Activated CD4-positive, alpha-beta memory T cell treated with anti-CD3 and anti-CD28 coated beads, Interleukin-2, amount 10 ng/mL, durations not matched to agents 7 days and 5 days (primary cell): ENCODE measurements at regions of chr2 and their contacts with region 1.

Region 1: DNA sequence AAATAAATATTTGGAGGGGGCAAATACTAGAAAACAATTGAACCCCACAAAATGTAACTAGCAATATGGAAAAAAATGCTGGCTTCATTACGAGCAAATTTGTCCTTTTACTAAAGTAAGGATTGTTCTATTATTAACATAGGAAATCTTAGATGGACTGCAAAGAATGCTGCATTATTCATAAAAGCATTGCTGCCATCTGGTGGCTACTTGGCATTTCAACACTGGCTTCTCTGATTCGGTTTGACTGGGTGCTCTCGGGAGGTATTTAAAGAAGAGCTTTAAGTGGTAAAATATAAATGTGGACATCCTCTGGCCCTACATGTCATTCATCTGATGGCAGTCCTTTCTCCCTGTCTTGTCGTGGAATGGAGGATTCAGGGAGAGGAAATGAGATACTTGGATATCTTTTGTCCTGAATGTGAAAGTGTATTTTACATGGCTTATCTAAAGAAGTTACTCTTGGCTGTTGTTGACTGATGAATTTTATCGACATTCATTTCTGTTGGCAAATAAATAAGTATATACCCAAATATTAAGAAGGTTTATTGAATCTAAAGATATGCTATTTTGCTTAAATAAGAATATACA is 130.2 kb downstream of the ARHGAP15 start:
- DNase-seq: peak; percentile 79
- H3K4me3 Mint-ChIP-seq: peak overlapping the region; percentile 71
- H3K27ac Mint-ChIP-seq: peak overlapping the region; percentile 99
- H3K4me1 Mint-ChIP-seq: peaks cover 81% of the 10 kb centered on the region
- H3K27me3 Mint-ChIP-seq: no peaks in the 10 kb centered on the region

Region 2: GRCh38 chr2:143034292-143035074 is 225.0 kb before region 1 on chr2:
- CTCF ChIA-PET with region 1: interaction called, 17 read pairs
- POLR2A ChIA-PET with region 1: no interaction called
- DNase-seq: peak; percentile 63
- H3K4me3 Mint-ChIP-seq: no peak overlapping the region
- H3K27ac Mint-ChIP-seq: no peak overlapping the region
- H3K4me1 Mint-ChIP-seq: peaks cover 8% of the 10 kb centered on the region
- H3K27me3 Mint-ChIP-seq: peaks cover 4% of the 10 kb centered on the region

Region 3: GRCh38 chr2:143128681-143129580 is 130.5 kb before region 1 on chr2 and contains the start of gene ARHGAP15:
- CTCF ChIA-PET with region 1: interaction called, 44 read pairs
- POLR2A ChIA-PET with region 1: interaction called, 231 read pairs
- DNase-seq: peak; percentile 79
- H3K4me3 Mint-ChIP-seq: peak within 1 kb of the TSS; percentile 85
- H3K27ac Mint-ChIP-seq: peak within 1 kb of the TSS; percentile 99
- H3K4me1 Mint-ChIP-seq: peaks cover 39% of the 10 kb centered on the region
- H3K27me3 Mint-ChIP-seq: no peaks in the 10 kb centered on the region
- total RNA-seq, gene ARHGAP15: 167 TPM

Region 4: DNA sequence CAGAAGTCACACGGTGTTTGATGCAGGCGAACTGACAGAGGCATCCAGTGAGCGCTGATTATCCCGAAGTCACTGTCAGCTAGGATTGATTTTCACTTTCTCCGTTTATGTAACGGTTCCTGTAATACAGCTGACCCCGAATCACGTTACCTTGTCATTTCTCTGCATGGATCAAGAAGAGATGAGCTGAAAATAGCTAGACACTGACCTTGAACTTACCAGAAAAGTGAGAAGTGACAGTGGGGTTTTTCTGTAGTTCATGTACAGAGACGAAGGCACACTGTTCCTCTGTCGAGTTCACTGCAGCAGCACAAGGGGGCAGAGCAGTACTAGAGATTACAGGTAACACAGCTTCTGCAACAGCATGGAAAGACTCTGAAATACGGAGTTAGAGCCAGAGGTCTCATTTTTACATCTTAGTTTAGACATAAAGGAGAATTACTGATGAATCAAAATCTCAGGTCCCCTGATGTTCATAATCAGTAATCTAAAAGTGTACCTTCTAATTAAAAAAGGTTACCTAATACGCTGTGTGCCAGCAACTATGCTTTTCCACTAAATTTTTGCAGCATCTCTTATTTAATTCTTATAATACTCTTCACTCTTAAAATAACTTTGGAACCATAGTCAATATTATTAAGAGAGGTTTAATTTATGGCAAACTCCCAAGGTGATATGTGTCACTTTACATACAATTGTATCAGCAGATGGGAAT is 97.2 kb before region 1 on chr2:
- CTCF ChIA-PET with region 1: interaction called, 18 read pairs
- POLR2A ChIA-PET with region 1: interaction called, 29 read pairs
- DNase-seq: peak; percentile 48
- H3K4me3 Mint-ChIP-seq: no peak overlapping the region
- H3K27ac Mint-ChIP-seq: no peak overlapping the region
- H3K4me1 Mint-ChIP-seq: peaks cover 51% of the 10 kb centered on the region
- H3K27me3 Mint-ChIP-seq: no peaks in the 10 kb centered on the region

Region 5: DNA sequence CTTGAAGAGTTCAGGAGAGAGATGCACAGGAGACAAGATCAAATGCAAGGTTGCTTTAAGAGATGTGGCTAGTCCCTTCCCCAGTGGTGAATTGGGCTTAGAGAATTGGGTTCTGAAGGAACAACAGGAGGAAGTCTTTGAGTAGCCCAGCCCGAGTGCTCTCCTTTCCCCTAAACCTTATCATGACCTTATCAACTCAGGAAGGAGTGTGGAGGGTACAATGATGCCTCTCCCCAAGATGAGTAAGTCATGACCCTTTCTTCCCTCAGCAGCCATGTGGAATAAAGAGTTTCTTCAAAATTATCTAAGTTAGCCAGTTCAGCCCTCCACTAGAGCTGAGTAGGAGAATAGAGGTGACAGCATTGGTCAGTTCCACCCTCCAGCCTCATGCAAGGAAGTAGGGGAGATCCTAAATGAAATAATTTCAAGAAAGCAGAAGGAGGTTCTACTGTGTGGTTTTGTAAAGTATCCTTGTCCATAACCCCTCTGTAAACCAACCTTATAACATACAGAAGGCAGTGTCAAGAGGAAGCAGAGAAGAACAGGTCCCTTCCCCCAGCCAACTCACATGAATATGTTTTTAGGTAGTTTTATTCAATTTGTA is 41.8 kb before region 1 on chr2:
- CTCF ChIA-PET with region 1: interaction called, 21 read pairs
- POLR2A ChIA-PET with region 1: interaction called, 9 read pairs
- DNase-seq: no peak
- H3K4me3 Mint-ChIP-seq: no peak overlapping the region
- H3K27ac Mint-ChIP-seq: peak overlapping the region; percentile 43
- H3K4me1 Mint-ChIP-seq: peaks cover 31% of the 10 kb centered on the region
- H3K27me3 Mint-ChIP-seq: no peaks in the 10 kb centered on the region

Region 6: DNA sequence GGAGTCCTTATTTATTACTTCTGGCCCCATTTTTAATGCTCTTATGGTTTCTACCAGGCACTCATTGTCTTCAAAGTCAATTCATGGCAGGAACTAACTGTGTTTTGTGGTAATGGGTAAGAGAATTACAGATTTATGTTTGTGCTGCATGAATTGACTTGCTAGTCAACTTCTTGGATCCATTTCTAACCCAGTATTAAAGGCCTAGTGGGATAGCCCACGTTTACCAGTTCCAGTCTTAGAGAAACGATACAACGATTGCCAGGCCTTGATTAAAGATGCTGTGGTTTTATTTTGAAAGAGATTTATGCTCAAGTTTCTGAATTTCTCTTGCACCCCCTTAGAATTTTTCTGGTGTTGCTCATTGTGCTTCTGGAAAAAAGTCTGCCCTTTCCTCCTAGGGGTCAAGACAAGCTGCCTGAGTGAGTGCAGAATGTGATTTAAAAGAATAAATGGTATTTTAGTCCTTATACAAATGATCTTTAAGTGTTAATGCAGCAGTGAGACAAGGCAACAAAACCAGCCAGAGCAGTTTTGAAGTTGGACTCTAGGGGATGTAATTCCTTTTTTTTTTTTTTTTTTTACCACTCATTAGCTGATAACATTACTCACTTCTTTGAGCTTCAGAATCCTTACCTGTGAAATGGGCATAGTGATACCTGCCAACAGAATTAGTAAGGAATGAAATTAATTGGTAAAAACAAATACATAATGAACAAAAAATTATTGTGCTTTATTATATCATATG is 28.8 kb before region 1 on chr2:
- CTCF ChIA-PET with region 1: interaction called, 31 read pairs
- POLR2A ChIA-PET with region 1: interaction called, 11 read pairs
- DNase-seq: no peak
- H3K4me3 Mint-ChIP-seq: no peak overlapping the region
- H3K27ac Mint-ChIP-seq: no peak overlapping the region
- H3K4me1 Mint-ChIP-seq: peaks cover 15% of the 10 kb centered on the region
- H3K27me3 Mint-ChIP-seq: no peaks in the 10 kb centered on the region

Region 7: GRCh38 chr2:143246815-143247744 is 12.4 kb before region 1 on chr2:
- CTCF ChIA-PET with region 1: interaction called, 12 read pairs
- POLR2A ChIA-PET with region 1: interaction called, 83 read pairs
- DNase-seq: peak; percentile 59
- H3K4me3 Mint-ChIP-seq: no peak overlapping the region
- H3K27ac Mint-ChIP-seq: peak overlapping the region; percentile 65
- H3K4me1 Mint-ChIP-seq: peaks cover 30% of the 10 kb centered on the region
- H3K27me3 Mint-ChIP-seq: no peaks in the 10 kb centered on the region

Region 8: DNA sequence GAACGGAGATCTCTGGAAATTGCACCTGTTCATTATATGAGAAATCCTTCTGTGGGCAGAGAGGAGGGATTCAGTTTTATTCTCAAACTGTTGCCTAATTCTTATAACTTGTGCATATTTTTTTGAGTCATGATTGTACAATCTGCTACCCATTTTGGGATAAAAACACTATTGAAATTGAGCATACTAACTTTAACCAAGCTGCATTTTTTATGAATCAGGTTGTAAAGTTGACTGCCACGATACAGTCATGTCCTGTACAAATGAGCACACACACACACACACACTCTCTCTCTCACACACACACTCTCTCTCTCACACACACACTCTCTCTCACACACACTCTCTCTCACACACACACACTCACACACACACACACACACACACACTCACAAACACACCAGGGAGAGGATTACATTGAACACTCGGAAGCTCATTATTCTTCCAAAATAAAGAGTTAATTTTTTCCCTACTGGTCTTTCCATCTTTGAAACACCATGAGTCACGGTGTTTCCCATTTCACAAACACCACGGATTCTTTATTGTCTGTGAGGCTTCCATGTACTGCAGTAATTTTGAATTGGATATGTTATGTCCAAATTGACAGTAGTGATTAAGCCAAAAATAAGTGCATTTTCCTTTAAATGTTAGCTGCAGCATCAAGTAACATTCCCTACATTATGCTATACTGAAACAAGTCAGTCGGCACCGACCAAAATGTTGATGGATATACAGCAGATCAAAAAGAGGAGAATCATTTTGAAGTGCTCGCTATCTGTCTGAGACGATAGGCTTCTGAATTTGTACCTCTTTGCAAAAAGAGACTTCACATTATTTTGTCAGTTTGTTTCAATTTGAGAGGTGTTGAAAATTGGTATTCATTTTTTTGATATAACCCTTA is 86.7 kb after region 1 on chr2:
- CTCF ChIA-PET with region 1: no interaction called
- POLR2A ChIA-PET with region 1: no interaction called
- DNase-seq: no peak
- H3K4me3 Mint-ChIP-seq: no peak overlapping the region
- H3K27ac Mint-ChIP-seq: no peak overlapping the region
- H3K4me1 Mint-ChIP-seq: no peaks in the 10 kb centered on the region
- H3K27me3 Mint-ChIP-seq: no peaks in the 10 kb centered on the region

Region 9: GRCh38 chr2:143422681-143423080 is 163.2 kb after region 1 on chr2:
- CTCF ChIA-PET with region 1: no interaction called
- POLR2A ChIA-PET with region 1: no interaction called
- DNase-seq: peak; percentile 24
- H3K4me3 Mint-ChIP-seq: no peak overlapping the region
- H3K27ac Mint-ChIP-seq: no peak overlapping the region
- H3K4me1 Mint-ChIP-seq: peaks cover 38% of the 10 kb centered on the region
- H3K27me3 Mint-ChIP-seq: no peaks in the 10 kb centered on the region